Calu3 (cell line): ENCODE measurements at regions of chr20 and their contacts with region 1.

Region 1: GRCh38 chr20:53899351-53900167 is 170.8 kb downstream of the BCAS1 start:
- DNase-seq: peak; percentile 50
- H3K4me3 Mint-ChIP-seq: no peak overlapping the region
- H3K27ac Mint-ChIP-seq: peak overlapping the region; percentile 89
- H3K4me1 Mint-ChIP-seq: peaks cover 62% of the 10 kb centered on the region
- H3K27me3 Mint-ChIP-seq: no peaks in the 10 kb centered on the region
- CTCF ChIP-seq: no peak

Region 2: GRCh38 chr20:53786445-53787267 is 112.9 kb before region 1 on chr20:
- CTCF ChIA-PET with region 1: interaction called, 10 read pairs
- intact Hi-C with region 1: no loop called
- DNase-seq: peak; percentile 37
- H3K4me3 Mint-ChIP-seq: peak overlapping the region; percentile 51
- H3K27ac Mint-ChIP-seq: peak overlapping the region; percentile 78
- H3K4me1 Mint-ChIP-seq: peaks cover 42% of the 10 kb centered on the region
- H3K27me3 Mint-ChIP-seq: no peaks in the 10 kb centered on the region
- CTCF ChIP-seq: no peak

Region 3: GRCh38 chr20:53949319-53949889 is 49.8 kb after region 1 on chr20:
- CTCF ChIA-PET with region 1: no interaction called
- intact Hi-C with region 1: no loop called
- DNase-seq: peak; percentile 61
- H3K4me3 Mint-ChIP-seq: no peak overlapping the region
- H3K27ac Mint-ChIP-seq: no peak overlapping the region
- H3K4me1 Mint-ChIP-seq: peaks cover 25% of the 10 kb centered on the region
- H3K27me3 Mint-ChIP-seq: no peaks in the 10 kb centered on the region
- CTCF ChIP-seq: no peak

Region 4: DNA sequence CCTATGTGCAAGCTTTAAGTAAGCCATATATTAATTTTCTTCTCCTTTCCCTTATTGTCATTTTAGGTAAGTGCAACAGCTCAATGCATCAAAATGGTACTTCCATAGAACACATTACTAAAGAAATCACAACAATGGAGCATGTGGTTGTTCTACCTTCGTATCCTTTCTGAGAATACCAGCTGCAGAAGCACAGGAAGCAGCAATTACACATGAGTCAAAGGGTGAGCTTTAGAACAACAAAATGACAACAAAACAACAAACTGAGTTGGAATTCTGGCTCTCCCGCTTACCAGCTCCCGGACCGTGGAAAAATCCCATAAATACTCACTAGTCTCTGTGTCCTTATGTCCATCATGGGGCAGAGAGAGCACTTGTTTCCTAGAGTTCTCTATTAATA is 62.0 kb after region 1 on chr20:
- CTCF ChIA-PET with region 1: interaction called, 10 read pairs
- intact Hi-C with region 1: no loop called
- DNase-seq: no peak
- H3K4me3 Mint-ChIP-seq: no peak overlapping the region
- H3K27ac Mint-ChIP-seq: no peak overlapping the region
- H3K4me1 Mint-ChIP-seq: no peaks in the 10 kb centered on the region
- H3K27me3 Mint-ChIP-seq: peaks cover 10% of the 10 kb centered on the region
- CTCF ChIP-seq: no peak